Body of pancreas (tissue), 4 donors: ENCODE measurements at regions of chr3 and their contacts with region 1.

Region 1: DNA sequence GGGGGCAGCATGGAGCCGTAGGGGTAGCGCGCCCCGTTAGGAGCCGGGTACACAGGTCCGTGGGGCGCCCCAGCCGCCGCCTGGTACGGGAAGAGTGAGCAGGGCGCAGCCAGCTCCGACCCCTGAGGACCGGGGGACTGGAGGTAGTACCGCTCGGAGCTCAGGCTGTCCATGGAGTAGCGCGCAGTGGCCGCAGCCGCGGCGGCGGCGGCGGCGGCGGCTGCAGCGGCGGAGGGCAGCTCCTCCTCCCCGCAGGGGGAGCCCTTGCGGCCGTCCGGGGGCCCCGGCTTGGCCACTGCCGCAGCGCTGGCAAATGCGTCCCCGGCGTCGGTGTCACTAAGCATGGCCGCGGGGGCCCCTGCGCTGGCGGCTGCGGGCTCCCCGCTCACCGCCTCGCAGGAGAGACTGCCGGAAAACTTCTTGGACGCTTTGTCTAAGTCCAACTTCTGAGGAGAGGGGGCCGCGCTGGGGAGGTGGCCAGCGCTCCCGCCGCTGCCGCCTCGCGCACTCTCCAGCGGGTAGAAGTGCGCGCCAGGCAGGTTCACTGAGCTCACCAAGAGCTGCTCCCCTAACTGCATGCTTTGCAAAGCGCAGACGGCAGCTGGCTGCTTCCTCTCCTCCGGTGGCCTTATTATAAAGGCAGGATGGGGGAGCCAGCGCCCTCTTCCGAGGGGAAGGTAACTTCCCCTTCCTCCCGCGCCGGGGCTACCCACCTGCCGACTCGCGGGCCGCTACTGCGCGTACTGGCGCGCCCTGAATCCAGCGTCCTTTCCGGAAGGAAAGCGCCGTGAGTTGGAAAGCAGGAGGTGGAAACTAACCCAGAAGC is at the start of gene EOMES:
- DNase-seq: peak; percentile 31 to 68 (median 52)
- ATAC-seq: peak; percentile 71
- H3K4me3 ChIP-seq: peak within 1 kb of the TSS; percentile 0 to 52
- H3K27ac ChIP-seq: peak within 1 kb of the TSS in 1 of 4 donors; percentile 8
- H3K4me1 ChIP-seq: peaks cover 36% of the 10 kb centered on the region
- H3K27me3 ChIP-seq: peaks cover 0 to 30% of the 10 kb centered on the region in 2 donors
- CTCF ChIP-seq: peak in 5 of 7 experiments; percentile 18 to 42 (median 33)
- POLR2A ChIP-seq: peak in 2 of 3 donors; percentile 36 to 38
- total RNA-seq, gene EOMES: 0.52 TPM in 1 of 2 donors, not detected in the other

Region 2: GRCh38 chr3:28334552-28334951 is 612.6 kb after region 1 on chr3:
- intact Hi-C with region 1: loop called (anchors 10 kb)
- DNase-seq: no peak
- ATAC-seq: no peak
- H3K4me3 ChIP-seq: no peak overlapping the region
- H3K27ac ChIP-seq: no peak overlapping the region
- H3K4me1 ChIP-seq: no peaks in the 10 kb centered on the region
- H3K27me3 ChIP-seq: no peaks in the 10 kb centered on the region
- CTCF ChIP-seq: peak in 2 of 7 experiments; percentile 12 to 27
- POLR2A ChIP-seq: no peak